ENCODE measurements at regions of chr5 and their contacts with region 1.

Region 1: GRCh38 chr5:139765409-139766217 is 30.0 kb upstream of the PSD2 start:
- DNase-seq: peak; percentile 87
- CTCF ChIP-seq: peak; percentile 95

Region 2: GRCh38 chr5:139422307-139422893 is 343.2 kb before region 1 on chr5:
- CTCF ChIA-PET with region 1: interaction called, 13 read pairs
- POLR2A ChIA-PET with region 1: no interaction called
- DNase-seq: peak; percentile 85
- CTCF ChIP-seq: peak; percentile 85

Region 3: DNA sequence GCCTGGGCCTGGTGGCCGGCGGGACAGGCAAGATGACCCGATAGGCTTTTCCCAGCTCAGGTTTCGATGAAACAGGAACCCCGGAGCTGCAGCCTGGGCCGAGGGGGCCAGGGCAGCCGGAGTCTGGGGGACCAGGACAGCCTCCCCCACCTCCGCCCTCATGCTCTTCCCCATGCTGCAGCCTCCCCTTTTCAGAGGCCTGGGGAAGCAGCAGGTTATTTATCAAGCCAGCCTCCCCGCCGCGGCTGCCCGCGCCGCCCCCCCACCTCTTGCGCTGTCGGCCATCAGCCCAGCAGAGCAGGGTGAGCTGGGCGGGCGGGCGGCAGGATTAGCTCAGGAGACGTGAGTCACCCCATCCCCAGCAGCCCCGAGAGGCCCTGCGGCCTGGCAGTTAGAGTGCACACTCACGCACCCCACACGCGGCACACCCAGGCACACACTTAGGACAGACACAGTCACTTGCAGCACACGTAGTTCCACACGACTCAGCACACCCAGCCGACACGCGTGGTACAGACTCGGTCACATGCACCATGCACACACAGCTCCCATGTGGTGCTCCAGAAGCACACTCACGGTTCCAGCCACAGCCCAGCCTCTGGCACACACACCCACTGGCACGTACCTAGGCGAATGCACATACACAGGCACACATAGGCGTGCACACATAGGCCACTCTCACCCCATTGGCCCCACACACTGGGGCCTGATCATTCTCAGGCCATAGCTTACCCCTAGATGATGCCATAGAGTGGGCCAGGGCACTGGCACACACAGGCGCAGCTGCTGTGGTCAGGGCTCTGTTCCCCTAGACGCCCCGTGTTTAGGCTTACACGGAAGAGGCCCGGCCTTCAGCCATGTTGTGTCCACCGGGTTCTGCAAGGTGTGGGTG is 104.4 kb before region 1 on chr5:
- CTCF ChIA-PET with region 1: interaction called, 11 read pairs
- POLR2A ChIA-PET with region 1: no interaction called
- DNase-seq: peak; percentile 60
- CTCF ChIP-seq: no peak

Region 4: GRCh38 chr5:139696894-139697658 is 68.5 kb before region 1 on chr5:
- CTCF ChIA-PET with region 1: interaction called, 16 read pairs
- POLR2A ChIA-PET with region 1: no interaction called
- DNase-seq: peak; percentile 61
- CTCF ChIP-seq: no peak

Region 5: DNA sequence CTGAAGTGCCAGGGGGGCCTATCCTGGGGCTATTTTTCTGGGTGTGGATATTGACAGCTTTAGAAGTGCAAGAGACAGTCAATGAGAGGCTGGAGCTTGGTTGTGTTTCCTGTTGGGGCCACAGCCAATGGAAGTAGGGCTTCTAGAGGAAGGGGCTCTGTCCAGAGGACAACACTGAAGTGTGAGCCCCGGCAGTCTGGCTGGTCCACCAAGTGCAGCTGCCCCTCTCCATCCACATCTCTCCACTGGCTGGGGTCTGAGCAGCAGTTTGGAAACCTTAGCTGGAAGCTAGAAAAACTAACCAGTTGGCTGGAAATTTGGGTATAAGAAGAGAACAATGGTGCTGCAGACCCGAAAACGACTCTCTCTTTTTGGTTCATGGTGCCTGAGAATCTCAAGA is 34.3 kb before region 1 on chr5:
- CTCF ChIA-PET with region 1: interaction called, 21 read pairs
- POLR2A ChIA-PET with region 1: interaction called, 4 read pairs
- DNase-seq: no peak
- CTCF ChIP-seq: no peak

Region 6: GRCh38 chr5:139745800-139746690 is 19.6 kb before region 1 on chr5:
- CTCF ChIA-PET with region 1: interaction called, 150 read pairs
- POLR2A ChIA-PET with region 1: no interaction called
- DNase-seq: peak; percentile 76
- CTCF ChIP-seq: no peak

Region 7: GRCh38 chr5:139820606-139821005 is 55.0 kb after region 1 on chr5:
- CTCF ChIA-PET with region 1: no interaction called
- POLR2A ChIA-PET with region 1: no interaction called
- DNase-seq: no peak
- CTCF ChIP-seq: no peak

Region 8: GRCh38 chr5:140125637-140126036 is 360.0 kb after region 1 on chr5 and contains the start of gene IGIP:
- CTCF ChIA-PET with region 1: no interaction called
- POLR2A ChIA-PET with region 1: no interaction called
- DNase-seq: no peak
- CTCF ChIP-seq: no peak

Measured in GM10248 (cell line).